IMR-90 (cell line): ENCODE measurements at regions of chr20 and their contacts with region 1.

Region 1: GRCh38 chr20:58256842-58257241 is 28.4 kb upstream of the ANKRD60 start:
- DNase-seq: no peak
- ATAC-seq: no peak
- H3K4me3 ChIP-seq: no peak overlapping the region
- H3K27ac ChIP-seq: no peak overlapping the region
- H3K4me1 ChIP-seq: no peaks in the 10 kb centered on the region; the same call in 1 of the 2 replicates
- H3K27me3 ChIP-seq: no peaks in the 10 kb centered on the region
- CTCF ChIP-seq: no peak
- POLR2A ChIP-seq: no peak
- RAD21 ChIP-seq: no peak

Region 2: GRCh38 chr20:58293453-58293852 is 36.6 kb after region 1 on chr20:
- CTCF ChIA-PET with region 1: no interaction called
- POLR2A ChIA-PET with region 1: no interaction called
- dilution Hi-C with region 1: no loop called
- in situ Hi-C with region 1: no loop called
- intact Hi-C with region 1: loop called (anchors 5 kb)
- DNase-seq: no peak
- ATAC-seq: no peak
- H3K4me3 ChIP-seq: no peak overlapping the region
- H3K27ac ChIP-seq: no peak overlapping the region
- H3K4me1 ChIP-seq: peaks cover 4% of the 10 kb centered on the region
- H3K27me3 ChIP-seq: no peaks in the 10 kb centered on the region
- CTCF ChIP-seq: no peak
- POLR2A ChIP-seq: no peak
- RAD21 ChIP-seq: no peak